ENCODE measurements at regions of chr17 and their contacts with region 1.

Region 1: DNA sequence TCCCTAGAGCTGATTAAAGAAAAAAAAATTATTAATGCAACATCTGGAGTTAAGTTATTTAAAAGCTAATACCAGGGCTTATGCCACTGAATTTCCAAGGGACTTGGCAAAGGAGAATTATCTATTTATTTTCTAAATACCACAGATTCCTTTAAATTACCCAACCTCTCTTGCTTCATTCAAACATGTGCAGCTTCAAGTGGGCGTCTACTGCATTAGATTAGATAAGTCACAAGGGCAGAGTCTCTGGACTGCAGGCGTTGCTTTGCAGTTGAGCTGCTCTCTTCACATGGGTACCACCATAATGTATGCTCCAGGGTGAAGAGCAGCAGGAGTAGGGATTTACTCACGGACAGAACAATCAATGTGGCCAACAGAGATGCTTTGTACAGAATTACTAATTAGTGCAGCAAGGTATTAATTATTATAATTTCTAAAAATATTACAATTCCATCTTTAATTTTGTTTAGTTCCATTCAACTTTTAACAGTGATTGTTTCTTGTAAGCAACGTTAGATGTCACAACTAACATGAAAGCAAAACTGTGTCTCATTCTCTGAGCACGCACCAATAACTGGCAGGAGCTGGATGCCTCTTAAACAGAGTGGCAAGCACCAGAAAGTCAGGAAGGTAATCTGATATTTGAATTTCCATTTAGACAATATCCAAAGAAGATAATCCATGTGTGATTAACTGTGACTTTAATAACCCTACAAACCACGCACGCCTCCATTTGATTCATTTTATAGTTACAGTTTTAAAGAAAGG is 214.2 kb downstream of the STX8 start:
- DNase-seq: peak; percentile 89
- ATAC-seq: peak; percentile 88
- H3K4me3 ChIP-seq: no peak overlapping the region
- H3K27ac ChIP-seq: no peak overlapping the region
- H3K4me1 ChIP-seq: peaks cover 9% of the 10 kb centered on the region; the same call in 1 of the 2 replicates
- H3K27me3 ChIP-seq: no peaks in the 10 kb centered on the region
- CTCF ChIP-seq: no peak
- POLR2A ChIP-seq: no peak
- RAD21 ChIP-seq: no peak

Region 2: GRCh38 chr17:9273428-9274391 is 87.7 kb before region 1 on chr17:
- CTCF ChIA-PET with region 1: no interaction called
- POLR2A ChIA-PET with region 1: no interaction called
- dilution Hi-C with region 1: no loop called
- in situ Hi-C with region 1: no loop called
- intact Hi-C with region 1: loop called (anchors 10 kb)
- DNase-seq: peak; percentile 52
- ATAC-seq: peak; percentile 35
- H3K4me3 ChIP-seq: no peak overlapping the region
- H3K27ac ChIP-seq: no peak overlapping the region
- H3K4me1 ChIP-seq: peaks cover 2% of the 10 kb centered on the region; the same call in 1 of the 2 replicates
- H3K27me3 ChIP-seq: no peaks in the 10 kb centered on the region
- CTCF ChIP-seq: no peak
- POLR2A ChIP-seq: no peak
- RAD21 ChIP-seq: no peak

Region 3: GRCh38 chr17:9291912-9292560 is 69.3 kb before region 1 on chr17:
- CTCF ChIA-PET with region 1: no interaction called
- POLR2A ChIA-PET with region 1: no interaction called
- dilution Hi-C with region 1: no loop called
- in situ Hi-C with region 1: no loop called
- intact Hi-C with region 1: no loop called
- DNase-seq: peak; percentile 25
- ATAC-seq: peak; percentile 95
- H3K4me3 ChIP-seq: no peak overlapping the region
- H3K27ac ChIP-seq: no peak overlapping the region
- H3K4me1 ChIP-seq: no peaks in the 10 kb centered on the region; the same call in 1 of the 2 replicates
- H3K27me3 ChIP-seq: no peaks in the 10 kb centered on the region
- CTCF ChIP-seq: peak; percentile 45
- POLR2A ChIP-seq: no peak
- RAD21 ChIP-seq: peak; percentile 58

Region 4: DNA sequence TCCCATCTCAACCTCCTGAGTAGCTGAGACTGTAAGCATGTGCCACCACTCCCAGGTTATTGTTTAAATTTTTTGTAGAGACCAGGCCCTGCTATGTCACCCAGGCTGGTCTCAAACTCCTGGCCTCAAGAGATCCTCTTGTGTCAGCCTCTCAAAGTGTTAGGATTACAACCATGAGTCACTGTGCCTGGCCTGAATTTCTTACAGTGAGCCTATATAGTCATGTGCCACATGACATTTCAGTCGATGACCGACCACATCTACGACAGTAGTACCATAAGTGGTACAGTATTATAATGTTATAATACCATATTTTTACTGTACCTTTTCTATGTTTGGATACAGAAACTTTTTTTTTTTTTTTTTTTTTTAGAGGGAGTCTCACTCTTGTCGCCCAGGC is 19.0 kb after region 1 on chr17:
- CTCF ChIA-PET with region 1: no interaction called
- POLR2A ChIA-PET with region 1: no interaction called
- dilution Hi-C with region 1: no loop called
- in situ Hi-C with region 1: no loop called
- intact Hi-C with region 1: no loop called
- DNase-seq: peak; percentile 28
- ATAC-seq: no peak
- H3K4me3 ChIP-seq: no peak overlapping the region
- H3K27ac ChIP-seq: no peak overlapping the region
- H3K4me1 ChIP-seq: no peaks in the 10 kb centered on the region
- H3K27me3 ChIP-seq: no peaks in the 10 kb centered on the region
- CTCF ChIP-seq: no peak
- POLR2A ChIP-seq: no peak
- RAD21 ChIP-seq: no peak

Region 5: GRCh38 chr17:9512323-9513168 is 151.2 kb after region 1 on chr17:
- CTCF ChIA-PET with region 1: no interaction called
- POLR2A ChIA-PET with region 1: no interaction called
- dilution Hi-C with region 1: no loop called
- in situ Hi-C with region 1: no loop called
- intact Hi-C with region 1: loop called (anchors 10 kb)
- DNase-seq: peak; percentile 76
- ATAC-seq: peak; percentile 65
- H3K4me3 ChIP-seq: no peak overlapping the region
- H3K27ac ChIP-seq: no peak overlapping the region
- H3K4me1 ChIP-seq: no peaks in the 10 kb centered on the region
- H3K27me3 ChIP-seq: no peaks in the 10 kb centered on the region
- CTCF ChIP-seq: no peak
- POLR2A ChIP-seq: no peak
- RAD21 ChIP-seq: no peak

Region 6: GRCh38 chr17:9684955-9685621 is 323.7 kb after region 1 on chr17:
- CTCF ChIA-PET with region 1: no interaction called
- POLR2A ChIA-PET with region 1: no interaction called
- dilution Hi-C with region 1: no loop called
- in situ Hi-C with region 1: no loop called
- intact Hi-C with region 1: no loop called
- DNase-seq: no peak
- ATAC-seq: no peak
- H3K4me3 ChIP-seq: no peak overlapping the region
- H3K27ac ChIP-seq: no peak overlapping the region
- H3K4me1 ChIP-seq: no peaks in the 10 kb centered on the region
- H3K27me3 ChIP-seq: no peaks in the 10 kb centered on the region
- CTCF ChIP-seq: no peak
- POLR2A ChIP-seq: no peak
- RAD21 ChIP-seq: no peak

Measured in IMR-90 (cell line).